HepG2 (cell line): ENCODE measurements at regions of chr17 and their contacts with region 1.

Region 1: GRCh38 chr17:64145757-64146417 is 15.9 kb upstream of the ERN1 start:
- DNase-seq: peak; percentile 100
- ATAC-seq: peak; percentile 78
- H3K4me3 ChIP-seq: peak overlapping the region; percentile 75 to 86 (median 84)
- H3K27ac ChIP-seq: peak overlapping the region; percentile 88
- H3K4me1 ChIP-seq: peaks cover 55% of the 10 kb centered on the region
- H3K27me3 ChIP-seq: no peaks in the 10 kb centered on the region; a peak in 1 of 5 replicates
- CTCF ChIP-seq: no peak; the same call in none of the 2 replicates
- EP300 ChIP-seq: peak in 1 of 2 experiments; percentile 25; a peak in 1 of 4 replicates
- POLR2A ChIP-seq: peak; percentile 100
- RAD21 ChIP-seq: peak; percentile 74

Region 2: DNA sequence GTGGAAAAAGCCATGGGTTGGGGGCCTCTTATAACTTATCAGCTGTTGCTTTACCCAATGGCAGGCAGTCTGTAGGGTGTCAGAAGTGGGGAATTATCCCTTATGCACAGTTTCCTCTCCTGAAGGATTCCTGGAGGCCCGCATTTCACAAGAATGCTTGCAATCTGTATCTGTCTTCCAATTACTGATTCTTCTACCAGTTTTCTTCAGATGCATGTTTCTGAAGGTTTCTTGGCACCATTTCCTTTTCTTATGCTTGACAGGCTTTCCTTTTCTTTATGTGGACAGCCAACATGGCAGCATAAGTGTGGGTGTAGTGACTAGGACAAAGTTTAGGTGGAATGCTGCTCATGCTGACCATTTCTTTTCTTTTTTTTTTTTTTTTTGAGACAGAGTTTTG is 487.5 kb before region 1 on chr17:
- CTCF ChIA-PET with region 1: no interaction called
- POLR2A ChIA-PET with region 1: no interaction called
- in situ Hi-C with region 1: no loop called
- intact Hi-C with region 1: no loop called
- DNase-seq: no peak
- ATAC-seq: no peak
- H3K4me3 ChIP-seq: no peak overlapping the region
- H3K27ac ChIP-seq: no peak overlapping the region
- H3K4me1 ChIP-seq: no peaks in the 10 kb centered on the region
- H3K27me3 ChIP-seq: no peaks in the 10 kb centered on the region
- CTCF ChIP-seq: no peak
- EP300 ChIP-seq: no peak
- POLR2A ChIP-seq: no peak
- RAD21 ChIP-seq: no peak

Region 3: GRCh38 chr17:64025732-64026294 is 120.1 kb before region 1 on chr17:
- CTCF ChIA-PET with region 1: no interaction called
- POLR2A ChIA-PET with region 1: interaction called, 26 read pairs
- in situ Hi-C with region 1: no loop called
- intact Hi-C with region 1: no loop called
- DNase-seq: peak; percentile 82
- ATAC-seq: peak; percentile 89
- H3K4me3 ChIP-seq: peak overlapping the region in 1 of 3 experiments; percentile 47; a peak in 4 of 6 replicates
- H3K27ac ChIP-seq: no peak overlapping the region
- H3K4me1 ChIP-seq: peaks cover 52% of the 10 kb centered on the region
- H3K27me3 ChIP-seq: no peaks in the 10 kb centered on the region
- CTCF ChIP-seq: peak; percentile 99
- EP300 ChIP-seq: peak in 1 of 2 experiments; percentile 42; a peak in 1 of 4 replicates
- POLR2A ChIP-seq: no peak
- RAD21 ChIP-seq: peak; percentile 66; the same call in 1 of the 2 replicates

Region 4: GRCh38 chr17:64123114-64123513 is 22.8 kb before region 1 on chr17:
- CTCF ChIA-PET with region 1: no interaction called
- POLR2A ChIA-PET with region 1: interaction called, 138 read pairs
- in situ Hi-C with region 1: no loop called
- intact Hi-C with region 1: no loop called
- DNase-seq: no peak
- ATAC-seq: no peak
- H3K4me3 ChIP-seq: no peak overlapping the region
- H3K27ac ChIP-seq: no peak overlapping the region
- H3K4me1 ChIP-seq: peaks cover 77% of the 10 kb centered on the region
- H3K27me3 ChIP-seq: no peaks in the 10 kb centered on the region
- CTCF ChIP-seq: no peak
- EP300 ChIP-seq: no peak
- POLR2A ChIP-seq: no peak
- RAD21 ChIP-seq: no peak

Region 5: GRCh38 chr17:64174686-64175456 is 29.0 kb after region 1 on chr17:
- CTCF ChIA-PET with region 1: no interaction called
- POLR2A ChIA-PET with region 1: interaction called, 39 read pairs
- in situ Hi-C with region 1: loop called (anchors 5 kb)
- intact Hi-C with region 1: no loop called
- DNase-seq: no peak
- ATAC-seq: no peak
- H3K4me3 ChIP-seq: no peak overlapping the region
- H3K27ac ChIP-seq: no peak overlapping the region
- H3K4me1 ChIP-seq: peaks cover 37% of the 10 kb centered on the region
- H3K27me3 ChIP-seq: no peaks in the 10 kb centered on the region
- CTCF ChIP-seq: no peak
- EP300 ChIP-seq: no peak
- POLR2A ChIP-seq: no peak
- RAD21 ChIP-seq: no peak

Region 6: DNA sequence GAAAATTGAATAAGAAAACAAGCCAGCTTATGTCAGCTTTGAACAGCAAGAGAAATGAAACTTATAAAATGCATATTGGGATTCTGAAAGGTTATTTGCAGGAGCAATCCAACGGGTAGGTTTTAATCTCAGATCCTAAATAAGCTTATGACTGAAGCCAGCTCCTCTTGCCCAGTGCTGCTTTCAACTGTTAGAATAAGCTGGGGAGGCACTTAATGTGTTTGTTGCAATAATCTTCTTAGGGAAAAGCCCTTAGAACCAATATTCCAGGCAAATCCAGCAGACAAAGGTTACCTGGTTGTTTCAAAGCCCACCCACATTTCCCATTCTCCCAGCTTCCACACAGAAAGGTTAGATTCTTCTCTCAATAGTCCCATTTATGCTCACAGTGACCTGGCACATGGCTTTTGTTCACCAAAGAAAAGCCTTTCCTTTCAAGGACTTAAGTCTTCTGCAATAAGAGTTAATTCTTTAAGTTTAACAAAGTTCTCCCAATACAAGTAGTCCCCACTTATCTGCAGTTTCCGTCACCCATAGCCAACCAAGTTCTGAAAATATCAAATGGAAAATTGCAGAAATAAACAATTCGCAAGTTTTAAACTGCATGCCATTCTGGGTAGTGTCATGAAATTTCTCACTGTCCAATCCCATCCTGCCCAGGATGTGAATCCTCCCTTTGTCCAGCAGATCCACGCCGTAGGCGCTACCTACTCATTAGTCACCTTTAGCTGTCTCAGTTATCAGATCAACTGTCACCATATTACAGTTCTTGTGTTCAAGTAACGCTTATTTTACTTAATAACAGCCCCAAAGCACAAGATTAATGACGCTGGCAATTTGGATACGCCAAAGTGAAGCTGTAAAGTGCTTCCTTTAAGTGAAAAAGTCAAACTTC is 111.3 kb after region 1 on chr17:
- CTCF ChIA-PET with region 1: no interaction called
- POLR2A ChIA-PET with region 1: interaction called, 80 read pairs
- in situ Hi-C with region 1: loop called (anchors 5 kb)
- intact Hi-C with region 1: loop called (anchors 5 kb)
- DNase-seq: no peak
- ATAC-seq: no peak
- H3K4me3 ChIP-seq: no peak overlapping the region
- H3K27ac ChIP-seq: no peak overlapping the region
- H3K4me1 ChIP-seq: peaks cover 64% of the 10 kb centered on the region
- H3K27me3 ChIP-seq: no peaks in the 10 kb centered on the region
- CTCF ChIP-seq: no peak
- EP300 ChIP-seq: no peak
- POLR2A ChIP-seq: no peak
- RAD21 ChIP-seq: no peak

Region 7: DNA sequence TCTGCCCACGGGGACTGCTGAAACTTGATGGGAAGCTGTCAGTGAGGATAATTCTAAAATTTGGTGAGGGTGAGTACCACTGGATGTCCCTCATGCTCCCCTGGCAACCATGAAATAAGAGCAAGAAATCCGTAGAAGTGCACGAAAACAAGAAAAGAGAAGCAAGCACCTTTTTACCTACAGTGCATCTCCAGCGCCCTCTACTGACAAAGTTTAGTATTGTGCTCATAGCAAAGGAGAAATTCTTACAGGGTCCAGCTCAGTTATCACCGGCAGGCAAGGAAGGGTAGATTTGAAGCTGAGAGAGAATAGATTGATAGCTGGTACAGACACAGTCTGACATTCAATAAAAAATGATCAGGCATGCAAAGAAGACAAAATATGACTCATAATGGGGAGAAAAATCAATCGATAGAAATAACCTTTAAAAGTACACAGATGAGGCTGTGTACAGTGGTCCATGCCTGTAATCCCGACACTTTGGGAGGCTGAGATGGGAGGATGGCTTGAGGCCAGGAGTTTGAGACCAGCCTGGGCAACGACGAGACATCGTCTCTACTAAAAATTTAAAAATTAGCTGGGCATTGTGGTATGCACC is 145.5 kb after region 1 on chr17:
- CTCF ChIA-PET with region 1: no interaction called
- POLR2A ChIA-PET with region 1: interaction called, 12 read pairs
- in situ Hi-C with region 1: no loop called
- intact Hi-C with region 1: no loop called
- DNase-seq: peak; percentile 63
- ATAC-seq: no peak; the same call in 2 of the 3 replicates
- H3K4me3 ChIP-seq: no peak overlapping the region
- H3K27ac ChIP-seq: no peak overlapping the region
- H3K4me1 ChIP-seq: no peaks in the 10 kb centered on the region
- H3K27me3 ChIP-seq: peaks cover under 1 to 1% of the 10 kb centered on the region in 2 experiments; a peak in 3 of 5 replicates
- CTCF ChIP-seq: peak; percentile 83
- EP300 ChIP-seq: no peak
- POLR2A ChIP-seq: no peak
- RAD21 ChIP-seq: peak; percentile 26; the same call in 1 of the 2 replicates